Activated CD4-positive, alpha-beta memory T cell treated with anti-CD3 and anti-CD28 coated beads, Interleukin-2, amount 10 ng/mL, durations not matched to agents 7 days and 5 days (primary cell): ENCODE measurements at regions of chr13 and their contacts with region 1.

Region 1: GRCh38 chr13:108895220-108895704 is 265.9 kb downstream of the MYO16 start:
- DNase-seq: no peak
- H3K4me3 Mint-ChIP-seq: no peak overlapping the region
- H3K27ac Mint-ChIP-seq: no peak overlapping the region
- H3K4me1 Mint-ChIP-seq: peaks cover 14% of the 10 kb centered on the region
- H3K27me3 Mint-ChIP-seq: peaks cover 4% of the 10 kb centered on the region

Region 2: GRCh38 chr13:108342369-108343289 is 552.6 kb before region 1 on chr13:
- CTCF ChIA-PET with region 1: interaction called, 11 read pairs
- POLR2A ChIA-PET with region 1: interaction called, 3 read pairs
- DNase-seq: peak; percentile 30
- H3K4me3 Mint-ChIP-seq: peak overlapping the region; percentile 51
- H3K27ac Mint-ChIP-seq: peak overlapping the region; percentile 74
- H3K4me1 Mint-ChIP-seq: peaks cover 52% of the 10 kb centered on the region
- H3K27me3 Mint-ChIP-seq: no peaks in the 10 kb centered on the region

Region 3: GRCh38 chr13:108915634-108916512 is 20.6 kb after region 1 on chr13:
- CTCF ChIA-PET with region 1: interaction called, 22 read pairs
- POLR2A ChIA-PET with region 1: interaction called, 8 read pairs
- DNase-seq: peak; percentile 90
- H3K4me3 Mint-ChIP-seq: peak overlapping the region; percentile 65
- H3K27ac Mint-ChIP-seq: peak overlapping the region; percentile 84
- H3K4me1 Mint-ChIP-seq: peaks cover 17% of the 10 kb centered on the region
- H3K27me3 Mint-ChIP-seq: no peaks in the 10 kb centered on the region